HepG2 (cell line): ENCODE measurements at regions of chr2 and their contacts with region 1.

Region 1: DNA sequence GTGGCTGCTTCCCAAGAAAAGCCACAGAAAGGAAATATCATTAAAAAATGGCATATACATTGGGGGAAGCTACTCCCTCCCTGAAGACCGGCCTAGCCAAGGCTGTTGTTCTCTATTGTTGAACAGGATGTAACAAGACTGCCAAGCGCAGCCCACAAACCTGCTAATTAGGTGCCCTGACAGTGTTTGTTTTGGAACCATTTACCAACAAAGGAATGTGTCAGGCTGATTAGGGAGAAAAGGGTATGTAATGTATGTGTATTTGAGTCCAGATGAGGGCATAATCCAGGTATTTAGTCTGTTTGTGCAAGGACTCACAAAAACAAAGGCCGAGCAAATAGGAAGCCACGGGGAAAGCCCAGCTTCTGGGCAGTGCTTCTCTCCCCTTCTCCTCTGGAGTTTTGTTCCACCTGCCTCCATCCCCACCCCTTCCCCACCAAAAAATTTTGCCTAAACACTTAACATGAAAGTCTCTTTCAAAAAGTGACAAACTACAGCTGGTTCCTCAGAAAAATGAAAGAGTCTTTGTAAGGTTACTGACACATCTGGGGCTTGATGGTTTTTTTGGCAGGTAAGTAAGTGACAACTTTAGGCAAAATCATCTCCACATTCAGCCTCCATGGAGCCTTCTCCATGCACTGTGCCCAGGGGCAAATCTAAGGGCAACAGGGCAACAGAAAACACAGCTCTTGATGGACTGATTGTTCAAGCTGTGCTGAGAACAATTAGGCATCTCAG is 78.3 kb upstream of the FZD5 start:
- DNase-seq: peak; percentile 99
- ATAC-seq: peak; percentile 83
- H3K4me3 ChIP-seq: peak overlapping the region; percentile 13 to 27 (median 25); a peak in 3 of 6 replicates
- H3K27ac ChIP-seq: peak overlapping the region; percentile 97
- H3K4me1 ChIP-seq: peaks cover 81% of the 10 kb centered on the region
- H3K27me3 ChIP-seq: no peaks in the 10 kb centered on the region
- CTCF ChIP-seq: peak; percentile 52
- EP300 ChIP-seq: peak; percentile 75 to 97
- POLR2A ChIP-seq: peak in 1 of 2 experiments; percentile 47; a peak in 1 of 4 replicates
- RAD21 ChIP-seq: peak; percentile 22; the same call in 1 of the 2 replicates

Region 2: DNA sequence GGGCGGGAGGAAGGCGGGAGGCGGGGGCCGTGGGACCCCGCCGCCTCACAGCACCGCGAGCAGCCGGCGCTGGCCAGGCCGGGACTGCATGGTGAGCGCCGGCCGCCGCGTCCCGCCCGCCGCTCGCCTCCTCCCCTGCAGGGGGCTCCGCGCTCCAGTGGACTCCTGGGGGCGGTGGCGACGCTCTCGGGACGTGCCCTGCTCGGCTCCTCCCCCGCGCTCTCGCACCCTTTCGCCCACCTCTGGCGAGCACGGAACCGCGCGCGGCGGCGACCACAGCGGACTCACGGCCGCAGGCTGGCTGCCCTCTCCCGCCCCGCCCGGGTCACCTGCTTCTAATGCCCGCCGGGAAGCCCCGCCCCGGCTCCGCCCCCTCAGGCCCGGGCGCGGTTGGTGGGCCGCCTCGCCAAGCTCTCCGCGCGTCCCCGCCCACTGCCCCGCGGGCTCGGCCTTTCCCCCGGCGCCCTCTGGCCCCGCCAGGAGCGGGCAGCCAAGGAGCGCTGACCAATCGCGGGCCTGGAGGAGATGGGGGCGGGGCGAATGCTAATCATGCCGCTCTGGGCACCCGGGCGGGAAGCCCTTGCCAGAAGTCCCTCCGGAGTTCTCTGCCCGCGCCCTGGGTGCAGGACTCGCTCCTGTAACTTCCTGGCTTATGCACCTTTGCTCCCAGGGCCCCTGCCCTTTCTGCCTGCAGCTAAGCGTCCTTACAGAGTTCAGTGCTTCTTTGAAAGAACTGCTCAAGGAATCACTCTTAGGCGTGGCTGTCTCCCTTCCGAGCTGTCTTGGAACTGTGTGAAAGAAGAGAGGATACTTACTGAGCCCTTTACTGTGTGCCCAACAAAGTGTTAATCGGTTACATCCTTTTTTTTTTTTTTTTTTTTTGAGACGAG is 78.1 kb before region 1 on chr2 and contains the start of gene FZD5:
- CTCF ChIA-PET with region 1: interaction called, 3 read pairs
- POLR2A ChIA-PET with region 1: interaction called, 232 read pairs
- in situ Hi-C with region 1: no loop called
- intact Hi-C with region 1: loop called (anchors 1 kb)
- DNase-seq: peak; percentile 98
- ATAC-seq: peak; percentile 87
- H3K4me3 ChIP-seq: peak within 1 kb of the TSS; percentile 80 to 98 (median 88)
- H3K27ac ChIP-seq: peak within 1 kb of the TSS; percentile 92
- H3K4me1 ChIP-seq: peaks cover 55% of the 10 kb centered on the region
- H3K27me3 ChIP-seq: no peaks in the 10 kb centered on the region; a peak in 1 of 5 replicates
- CTCF ChIP-seq: peak; percentile 87
- EP300 ChIP-seq: peak in 1 of 2 experiments; percentile 44; a peak in 2 of 4 replicates
- POLR2A ChIP-seq: peak in 1 of 2 experiments; percentile 91; a peak in 2 of 4 replicates
- RAD21 ChIP-seq: peak; percentile 100
- total RNA-seq, gene FZD5: 28.9 and 34.3 TPM in 2 replicates

Region 3: DNA sequence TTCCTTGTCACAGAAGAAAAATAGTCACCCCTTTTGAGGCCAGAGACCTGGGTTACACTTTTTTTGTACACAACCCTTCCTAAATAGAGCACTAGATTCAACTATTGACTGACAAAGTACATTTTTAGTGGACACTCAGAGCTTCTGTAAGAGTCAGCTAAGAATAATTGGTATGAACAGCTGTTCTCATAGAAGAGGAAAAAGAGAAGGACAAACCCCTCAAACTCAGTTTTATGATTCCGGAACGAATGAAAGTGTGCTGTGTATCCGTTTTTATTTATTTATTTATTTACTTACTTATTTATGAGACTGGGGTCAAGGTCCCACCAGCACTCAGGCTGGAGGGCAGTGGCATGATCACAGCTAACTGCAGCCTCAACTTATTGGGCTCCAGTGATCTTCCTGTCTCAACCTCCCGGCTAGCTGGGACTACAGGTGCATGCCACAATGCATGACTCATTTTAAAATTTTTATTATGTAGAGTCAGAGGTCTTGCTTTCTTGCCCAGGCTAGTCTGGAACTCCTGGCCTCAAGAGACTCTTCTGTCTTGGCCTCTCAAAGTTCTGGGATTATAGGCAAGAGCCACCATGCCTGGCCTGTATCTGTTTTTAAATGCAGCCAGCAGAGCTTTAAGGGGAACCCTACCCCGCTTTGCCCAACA is 42.3 kb before region 1 on chr2:
- CTCF ChIA-PET with region 1: no interaction called
- POLR2A ChIA-PET with region 1: interaction called, 288 read pairs
- in situ Hi-C with region 1: no loop called
- intact Hi-C with region 1: loop called (anchors 5 kb)
- DNase-seq: peak; percentile 39
- ATAC-seq: peak; percentile 15; the same call in 1 of the 3 replicates
- H3K4me3 ChIP-seq: no peak overlapping the region
- H3K27ac ChIP-seq: peak overlapping the region; percentile 43
- H3K4me1 ChIP-seq: peaks cover 61% of the 10 kb centered on the region
- H3K27me3 ChIP-seq: no peaks in the 10 kb centered on the region
- CTCF ChIP-seq: no peak
- EP300 ChIP-seq: no peak
- POLR2A ChIP-seq: no peak
- RAD21 ChIP-seq: no peak

Region 4: GRCh38 chr2:207825045-207825954 is 22.7 kb before region 1 on chr2:
- CTCF ChIA-PET with region 1: no interaction called
- POLR2A ChIA-PET with region 1: interaction called, 303 read pairs
- in situ Hi-C with region 1: no loop called
- intact Hi-C with region 1: loop called (anchors 1 kb)
- DNase-seq: no peak
- ATAC-seq: no peak
- H3K4me3 ChIP-seq: no peak overlapping the region
- H3K27ac ChIP-seq: peak overlapping the region; percentile 3
- H3K4me1 ChIP-seq: peaks cover 100% of the 10 kb centered on the region
- H3K27me3 ChIP-seq: no peaks in the 10 kb centered on the region
- CTCF ChIP-seq: no peak
- EP300 ChIP-seq: no peak
- POLR2A ChIP-seq: no peak
- RAD21 ChIP-seq: no peak

Region 5: DNA sequence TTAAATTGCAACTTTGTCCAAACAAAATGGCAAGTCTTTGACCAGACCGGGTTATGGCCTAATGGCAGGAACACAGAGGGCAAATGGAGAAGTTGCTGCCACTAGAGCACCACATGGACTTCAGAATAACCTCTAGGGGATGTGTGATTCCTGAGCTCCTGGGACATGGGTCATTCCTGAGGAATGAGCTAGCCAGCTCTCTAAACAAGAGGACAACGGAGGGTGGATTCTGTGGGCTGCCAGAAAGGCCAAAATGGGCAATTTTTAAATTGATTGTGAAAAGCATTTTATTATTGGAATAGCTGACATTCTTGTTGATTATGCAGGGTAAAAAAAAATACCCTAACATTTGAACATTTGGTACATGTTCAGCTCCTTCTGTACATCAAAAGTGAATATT is 31.6 kb after region 1 on chr2:
- CTCF ChIA-PET with region 1: no interaction called
- POLR2A ChIA-PET with region 1: interaction called, 12 read pairs
- in situ Hi-C with region 1: no loop called
- intact Hi-C with region 1: no loop called
- DNase-seq: peak; percentile 80
- ATAC-seq: peak; percentile 95
- H3K4me3 ChIP-seq: no peak overlapping the region
- H3K27ac ChIP-seq: peak overlapping the region; percentile 25
- H3K4me1 ChIP-seq: peaks cover 52% of the 10 kb centered on the region
- H3K27me3 ChIP-seq: no peaks in the 10 kb centered on the region
- CTCF ChIP-seq: peak; percentile 52
- EP300 ChIP-seq: 0 out of 4 replicates have a peak, but pooled peaks of 1 of the 2 experiments have one; percentile 18
- POLR2A ChIP-seq: no peak
- RAD21 ChIP-seq: no peak

Region 6: DNA sequence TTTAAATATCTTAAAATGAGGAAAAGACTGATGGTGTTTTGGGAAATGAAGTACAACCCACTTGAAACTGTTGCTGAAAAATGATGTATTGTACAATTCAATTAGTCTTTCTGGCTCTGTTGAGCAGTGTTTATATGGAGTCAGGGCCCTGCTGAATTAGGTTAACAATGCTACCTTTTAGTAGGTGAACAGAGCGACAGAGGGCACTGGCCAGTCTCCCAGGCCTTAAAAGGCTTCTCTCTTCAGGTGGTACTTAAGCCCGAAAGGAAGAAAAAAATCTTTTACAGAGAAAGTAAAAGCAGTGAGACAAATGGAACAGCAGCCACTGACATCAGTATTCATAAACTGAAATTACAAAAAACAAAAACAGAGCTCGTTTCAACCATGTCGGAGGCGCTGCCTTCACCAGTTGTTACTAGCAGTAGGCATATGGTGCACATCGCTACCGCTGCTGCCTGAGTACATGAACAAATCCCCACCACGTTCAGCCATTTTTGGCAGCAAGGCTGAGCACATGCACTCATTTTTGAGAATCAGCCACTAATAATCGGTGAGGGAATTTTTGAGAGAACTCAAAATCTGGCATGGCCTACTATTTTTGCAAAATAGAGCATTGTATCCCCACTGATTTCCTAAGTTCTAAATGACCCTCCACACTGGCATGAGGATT is 85.6 kb after region 1 on chr2:
- CTCF ChIA-PET with region 1: no interaction called
- POLR2A ChIA-PET with region 1: interaction called, 70 read pairs
- in situ Hi-C with region 1: no loop called
- intact Hi-C with region 1: loop called (anchors 2 kb)
- DNase-seq: no peak
- ATAC-seq: no peak
- H3K4me3 ChIP-seq: no peak overlapping the region
- H3K27ac ChIP-seq: peak overlapping the region; percentile 9
- H3K4me1 ChIP-seq: peaks cover 63% of the 10 kb centered on the region
- H3K27me3 ChIP-seq: no peaks in the 10 kb centered on the region
- CTCF ChIP-seq: no peak
- EP300 ChIP-seq: no peak
- POLR2A ChIP-seq: no peak
- RAD21 ChIP-seq: no peak

Region 7: DNA sequence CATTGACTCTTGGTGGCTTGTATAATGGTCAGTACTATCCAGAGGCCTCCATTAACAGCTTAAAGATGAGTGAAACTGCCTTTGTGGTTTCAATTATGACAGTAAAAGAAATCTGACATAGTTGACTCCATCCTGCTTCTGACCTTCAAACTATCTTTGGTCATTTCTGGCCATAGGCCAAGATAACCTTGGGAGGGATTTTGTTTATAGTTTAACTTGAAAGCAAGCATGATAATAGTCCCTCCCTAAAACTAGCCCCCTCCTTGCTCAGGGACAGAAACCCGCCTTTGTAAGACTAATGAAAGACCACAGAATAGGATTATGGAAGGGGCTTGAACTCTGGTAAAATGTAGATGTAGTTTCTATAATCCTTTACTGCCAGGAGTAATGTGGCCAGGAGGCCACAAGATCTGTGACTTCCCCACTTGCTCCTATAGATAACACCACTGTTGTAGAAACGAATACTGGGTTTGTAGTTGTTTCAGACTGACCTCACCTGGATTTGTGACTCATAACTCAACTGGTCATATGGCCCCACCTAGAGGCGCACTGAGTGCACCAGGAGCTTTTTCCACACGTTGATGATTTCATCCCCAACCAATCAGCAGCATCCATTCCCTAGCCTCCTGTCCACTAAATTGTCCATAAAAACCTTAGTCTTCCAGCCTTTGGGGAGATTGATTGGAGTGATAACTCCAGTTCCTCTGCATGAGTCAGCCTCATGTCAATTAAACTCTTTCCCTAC is 186.0 kb after region 1 on chr2:
- CTCF ChIA-PET with region 1: no interaction called
- POLR2A ChIA-PET with region 1: interaction called, 33 read pairs
- in situ Hi-C with region 1: no loop called
- intact Hi-C with region 1: loop called (anchors 1 kb)
- DNase-seq: peak; percentile 97
- ATAC-seq: peak; percentile 90
- H3K4me3 ChIP-seq: peak overlapping the region; percentile 4 to 16 (median 14); a peak in 2 of 6 replicates
- H3K27ac ChIP-seq: peak overlapping the region; percentile 70
- H3K4me1 ChIP-seq: peaks cover 70% of the 10 kb centered on the region
- H3K27me3 ChIP-seq: no peaks in the 10 kb centered on the region
- CTCF ChIP-seq: peak; percentile 98
- EP300 ChIP-seq: peak; percentile 53 to 55; a peak in 3 of 4 replicates
- POLR2A ChIP-seq: no peak
- RAD21 ChIP-seq: peak; percentile 91